ENCODE measurements at regions of chr6 and their contacts with region 1.

Region 1: GRCh38 chr6:154156135-154156896 is 117.3 kb downstream of the OPRM1 start:
- DNase-seq: peak; percentile 81
- H3K4me3 Mint-ChIP-seq: peak overlapping the region; percentile 60
- H3K27ac Mint-ChIP-seq: peak overlapping the region; percentile 68
- H3K4me1 Mint-ChIP-seq: peaks cover 49% of the 10 kb centered on the region
- H3K27me3 Mint-ChIP-seq: no peaks in the 10 kb centered on the region

Region 2: DNA sequence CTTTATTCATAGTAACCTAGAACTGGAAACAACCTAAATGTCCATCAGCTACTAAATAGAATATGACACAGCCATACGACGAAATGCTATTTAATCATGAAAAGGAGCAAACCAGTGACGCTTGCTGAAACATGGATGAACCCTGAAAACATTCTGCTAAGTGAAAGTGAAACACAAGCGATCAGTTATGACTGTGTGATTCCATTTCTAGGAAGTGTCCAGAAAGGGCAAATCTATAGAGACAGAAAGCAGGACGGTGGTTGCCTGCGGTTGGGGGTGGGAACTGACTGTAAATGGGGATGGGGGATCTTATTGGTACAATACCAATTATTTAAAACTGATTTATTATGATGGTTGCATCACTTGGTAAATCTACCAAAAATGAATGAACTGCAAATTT is 73.5 kb after region 1 on chr6:
- CTCF ChIA-PET with region 1: interaction called, 7 read pairs
- POLR2A ChIA-PET with region 1: no interaction called
- intact Hi-C with region 1: loop called (anchors 1 kb)
- DNase-seq: peak; percentile 88
- H3K4me3 Mint-ChIP-seq: peak overlapping the region; percentile 71
- H3K27ac Mint-ChIP-seq: peak overlapping the region; percentile 89
- H3K4me1 Mint-ChIP-seq: peaks cover 80% of the 10 kb centered on the region
- H3K27me3 Mint-ChIP-seq: no peaks in the 10 kb centered on the region

Region 3: GRCh38 chr6:154352898-154353585 is 196.7 kb after region 1 on chr6:
- CTCF ChIA-PET with region 1: interaction called, 5 read pairs
- POLR2A ChIA-PET with region 1: no interaction called
- intact Hi-C with region 1: loop called (anchors 1 kb)
- DNase-seq: peak; percentile 73
- H3K4me3 Mint-ChIP-seq: no peak overlapping the region
- H3K27ac Mint-ChIP-seq: no peak overlapping the region
- H3K4me1 Mint-ChIP-seq: peaks cover 25% of the 10 kb centered on the region
- H3K27me3 Mint-ChIP-seq: peaks cover 36% of the 10 kb centered on the region

Region 4: GRCh38 chr6:154410619-154411072 is 254.3 kb after region 1 on chr6:
- CTCF ChIA-PET with region 1: interaction called, 6 read pairs
- POLR2A ChIA-PET with region 1: no interaction called
- intact Hi-C with region 1: loop called (anchors 1 kb)
- DNase-seq: peak; percentile 77
- H3K4me3 Mint-ChIP-seq: no peak overlapping the region
- H3K27ac Mint-ChIP-seq: no peak overlapping the region
- H3K4me1 Mint-ChIP-seq: peaks cover 9% of the 10 kb centered on the region
- H3K27me3 Mint-ChIP-seq: peaks cover 20% of the 10 kb centered on the region

Region 5: DNA sequence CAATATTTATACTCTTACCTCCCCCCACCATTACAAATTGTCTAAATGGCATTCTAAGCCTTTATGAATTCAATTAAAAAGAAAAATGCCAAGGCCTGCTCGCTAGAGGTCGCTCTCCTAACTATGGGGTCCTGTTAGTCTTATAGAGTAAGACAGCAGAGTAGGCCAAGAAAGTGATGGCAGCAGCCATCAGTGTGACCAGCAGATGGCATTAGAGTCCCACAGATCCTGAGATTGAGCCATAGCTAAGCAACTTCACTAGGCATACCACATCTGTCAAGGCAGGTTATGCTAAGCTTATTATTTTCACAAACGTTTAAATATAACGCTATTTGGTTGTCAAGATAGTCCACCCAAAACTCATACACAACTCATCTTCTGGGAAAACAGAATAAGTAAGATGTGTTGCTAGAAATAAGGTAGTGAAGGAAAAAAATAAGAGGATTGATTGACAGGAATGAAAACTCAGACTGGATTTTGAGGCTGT is 519.3 kb after region 1 on chr6:
- CTCF ChIA-PET with region 1: interaction called, 21 read pairs
- POLR2A ChIA-PET with region 1: no interaction called
- intact Hi-C with region 1: loop called (anchors 5 kb)
- DNase-seq: peak; percentile 93
- H3K4me3 Mint-ChIP-seq: no peak overlapping the region
- H3K27ac Mint-ChIP-seq: no peak overlapping the region
- H3K4me1 Mint-ChIP-seq: no peaks in the 10 kb centered on the region
- H3K27me3 Mint-ChIP-seq: no peaks in the 10 kb centered on the region